Mammary epithelial cell (primary cell): ENCODE measurements at regions of chr15 and their contacts with region 1.

Region 1: DNA sequence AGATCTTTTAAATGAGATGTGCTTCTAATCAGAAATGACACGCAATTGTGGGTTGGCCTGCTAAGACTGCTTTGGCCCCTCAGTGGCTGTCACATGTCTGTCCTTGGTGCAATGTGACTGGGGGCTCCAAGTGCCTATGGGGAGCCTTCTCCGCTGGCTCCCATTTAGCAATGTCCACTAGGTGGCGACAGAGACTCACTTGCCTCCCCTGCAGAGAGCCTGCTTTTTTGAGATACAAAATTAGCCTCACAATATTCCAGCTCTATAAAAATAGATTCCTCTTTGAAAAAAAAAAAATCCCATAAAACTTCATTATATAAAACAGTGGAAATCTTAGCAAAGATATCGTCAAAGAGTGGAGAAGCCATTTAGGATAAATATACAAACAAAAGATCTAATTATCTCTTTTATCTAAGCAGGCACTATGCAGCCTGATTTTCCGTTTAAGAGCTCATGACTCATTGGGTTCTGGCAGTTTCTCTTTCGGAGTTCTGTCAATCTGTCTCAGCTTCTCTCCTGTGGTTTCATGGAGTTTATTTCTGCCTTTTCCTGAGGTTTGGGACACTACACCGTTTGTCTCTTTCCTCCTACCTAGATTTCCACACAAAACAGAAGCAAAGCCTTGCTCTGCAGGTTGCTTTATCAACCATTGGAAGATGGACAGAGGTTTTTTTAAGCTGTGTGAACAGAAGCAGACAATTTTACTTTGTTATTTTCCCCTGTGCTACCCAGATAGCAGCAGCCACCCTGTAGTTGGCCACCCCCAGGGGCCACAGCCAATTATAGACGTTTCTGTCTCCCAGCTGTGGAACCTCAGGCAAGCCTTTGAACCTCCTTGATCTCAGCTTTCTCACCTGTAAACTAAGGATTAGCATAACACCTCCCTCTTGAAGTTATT is 68.4 kb upstream of the TNFAIP8L3 start:
- DNase-seq: peak; percentile 75
- H3K4me3 ChIP-seq: peak overlapping the region in 2 of 3 experiments; percentile 8 to 34
- H3K27ac ChIP-seq: peak overlapping the region; percentile 47
- H3K4me1 ChIP-seq: peaks cover 8% of the 10 kb centered on the region
- H3K27me3 ChIP-seq: no peaks in the 10 kb centered on the region
- CTCF ChIP-seq: peak; percentile 97

Region 2: GRCh38 chr15:51030649-51031316 is 132.3 kb before region 1 on chr15:
- CTCF ChIA-PET with region 1: no interaction called
- dilution Hi-C with region 1: no loop called
- in situ Hi-C with region 1: no loop called
- intact Hi-C with region 1: no loop called
- DNase-seq: peak; percentile 40
- H3K4me3 ChIP-seq: no peak overlapping the region
- H3K27ac ChIP-seq: no peak overlapping the region
- H3K4me1 ChIP-seq: peaks cover 9% of the 10 kb centered on the region
- H3K27me3 ChIP-seq: no peaks in the 10 kb centered on the region
- CTCF ChIP-seq: no peak

Region 3: DNA sequence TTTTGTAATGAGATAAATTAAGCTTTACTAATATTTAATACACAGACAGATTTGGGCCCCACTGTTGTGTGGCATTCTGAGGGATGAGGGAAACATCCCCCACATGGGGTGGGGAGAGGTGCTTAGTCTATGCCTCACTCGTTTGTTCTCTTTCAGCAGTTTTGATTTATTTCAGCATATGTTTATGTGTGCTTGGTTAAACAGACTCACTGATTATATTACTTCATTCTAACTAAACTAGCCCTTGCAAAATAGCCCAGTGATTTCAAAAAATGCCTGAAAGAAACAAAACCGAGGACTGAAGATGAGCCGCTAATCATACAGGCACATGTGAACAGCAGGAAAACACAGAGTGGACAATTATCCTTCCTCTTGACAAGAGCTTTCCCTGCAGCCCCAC is 95.6 kb before region 1 on chr15:
- CTCF ChIA-PET with region 1: no interaction called
- dilution Hi-C with region 1: no loop called
- in situ Hi-C with region 1: no loop called
- intact Hi-C with region 1: no loop called
- DNase-seq: no peak
- H3K4me3 ChIP-seq: no peak overlapping the region
- H3K27ac ChIP-seq: no peak overlapping the region
- H3K4me1 ChIP-seq: no peaks in the 10 kb centered on the region
- H3K27me3 ChIP-seq: no peaks in the 10 kb centered on the region
- CTCF ChIP-seq: no peak

Region 4: DNA sequence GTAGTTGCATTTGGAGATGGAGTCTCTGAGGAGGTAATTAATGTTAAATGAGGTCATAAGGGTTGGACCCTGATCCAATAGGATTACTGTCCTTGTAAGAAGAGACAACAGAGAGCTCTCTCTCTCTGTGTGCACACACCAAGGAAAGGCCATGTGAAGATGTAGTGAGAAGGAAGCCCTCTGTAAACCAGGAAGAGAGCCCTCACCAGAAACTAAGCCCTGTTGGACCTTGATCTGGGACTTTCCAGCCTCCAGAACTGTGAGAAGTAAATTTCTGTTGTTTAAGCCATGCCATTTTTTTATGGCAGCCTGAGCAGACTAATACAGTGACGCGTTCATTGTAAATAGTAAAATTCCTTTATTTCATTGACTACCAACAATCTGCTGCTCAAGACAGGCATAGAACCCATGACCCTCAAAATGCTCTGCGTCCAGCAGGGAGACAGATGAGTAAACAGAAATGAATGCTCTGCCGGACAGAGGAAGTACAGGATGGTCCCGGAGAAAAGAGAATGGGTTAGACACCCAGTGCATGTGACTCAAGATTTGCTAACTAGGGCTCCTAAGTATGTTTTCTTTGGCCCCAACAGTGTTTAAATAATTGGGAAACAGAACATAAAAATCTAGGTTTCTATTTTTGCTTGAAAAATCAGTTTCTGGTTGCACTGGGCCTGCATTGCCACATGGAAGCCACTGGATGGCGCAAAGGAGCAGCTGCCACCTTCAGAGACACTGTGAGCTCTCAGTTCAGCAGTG is 30.6 kb before region 1 on chr15:
- CTCF ChIA-PET with region 1: interaction called, 11 read pairs
- dilution Hi-C with region 1: no loop called
- in situ Hi-C with region 1: no loop called
- intact Hi-C with region 1: loop called (anchors 1 kb)
- DNase-seq: peak; percentile 72
- H3K4me3 ChIP-seq: no peak overlapping the region
- H3K27ac ChIP-seq: peak overlapping the region; percentile 6
- H3K4me1 ChIP-seq: peaks cover 33% of the 10 kb centered on the region
- H3K27me3 ChIP-seq: no peaks in the 10 kb centered on the region
- CTCF ChIP-seq: peak; percentile 93 to 97

Region 5: GRCh38 chr15:51281368-51281967 is 118.4 kb after region 1 on chr15:
- CTCF ChIA-PET with region 1: no interaction called
- dilution Hi-C with region 1: no loop called
- in situ Hi-C with region 1: loop called in 1 of 2 experiments (anchors 25 kb)
- intact Hi-C with region 1: loop called (anchors 5 kb)
- DNase-seq: peak; percentile 24
- H3K4me3 ChIP-seq: no peak overlapping the region
- H3K27ac ChIP-seq: no peak overlapping the region
- H3K4me1 ChIP-seq: no peaks in the 10 kb centered on the region
- H3K27me3 ChIP-seq: peaks cover 2% of the 10 kb centered on the region
- CTCF ChIP-seq: peak; percentile 47 to 72

Region 6: GRCh38 chr15:51380999-51381795 is 218.1 kb after region 1 on chr15:
- CTCF ChIA-PET with region 1: interaction called, 14 read pairs
- dilution Hi-C with region 1: no loop called
- in situ Hi-C with region 1: loop called (anchors 5 kb)
- intact Hi-C with region 1: loop called (anchors 1 kb)
- DNase-seq: peak; percentile 61
- H3K4me3 ChIP-seq: no peak overlapping the region
- H3K27ac ChIP-seq: no peak overlapping the region
- H3K4me1 ChIP-seq: peaks cover 3% of the 10 kb centered on the region
- H3K27me3 ChIP-seq: no peaks in the 10 kb centered on the region
- CTCF ChIP-seq: peak; percentile 94

Region 7: DNA sequence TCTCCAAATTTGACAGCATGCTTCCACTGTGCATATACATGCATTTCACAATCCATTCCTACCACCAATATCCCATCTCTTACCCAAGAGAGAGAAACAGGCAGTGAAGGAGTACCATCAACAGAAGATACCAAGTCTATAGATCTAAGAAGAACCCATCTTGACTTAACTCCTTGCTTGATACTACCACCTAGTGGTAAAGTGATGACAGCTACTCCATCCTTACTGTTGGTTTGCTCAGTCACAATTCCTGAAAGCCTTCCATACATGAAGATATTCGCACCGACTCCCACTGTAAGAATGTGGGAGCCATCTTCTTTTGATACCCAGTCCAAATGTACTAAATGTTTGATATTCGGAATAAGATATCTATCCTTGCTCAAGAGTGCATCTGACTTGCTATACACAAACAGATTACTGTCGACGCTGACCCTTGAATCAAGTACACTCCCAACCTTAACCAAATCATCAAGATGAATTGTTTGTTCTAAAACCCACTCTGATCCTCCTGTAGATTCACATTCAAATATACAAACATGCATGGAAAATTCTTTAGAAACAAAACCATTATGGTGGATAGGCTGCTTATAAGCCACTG is 336.4 kb after region 1 on chr15:
- CTCF ChIA-PET with region 1: interaction called, 5 read pairs
- dilution Hi-C with region 1: no loop called
- in situ Hi-C with region 1: no loop called
- intact Hi-C with region 1: loop called (anchors 5 kb)
- DNase-seq: peak; percentile 48
- H3K4me3 ChIP-seq: no peak overlapping the region
- H3K27ac ChIP-seq: no peak overlapping the region
- H3K4me1 ChIP-seq: no peaks in the 10 kb centered on the region
- H3K27me3 ChIP-seq: no peaks in the 10 kb centered on the region
- CTCF ChIP-seq: peak; percentile 80 to 87